ENCODE measurements at regions of chr12 and their contacts with region 1.

Region 1: GRCh38 chr12:45615268-45615667 is 114.2 kb upstream of the ARID2 start:
- DNase-seq: no peak
- ATAC-seq: no peak
- H3K4me3 ChIP-seq: no peak overlapping the region
- H3K27ac ChIP-seq: no peak overlapping the region
- H3K4me1 ChIP-seq: no peaks in the 10 kb centered on the region
- H3K27me3 ChIP-seq: no peaks in the 10 kb centered on the region; the same call in none of the 2 replicates
- CTCF ChIP-seq: no peak

Region 2: GRCh38 chr12:45601888-45602287 is 13.4 kb before region 1 on chr12:
- CTCF ChIA-PET with region 1: no interaction called
- POLR2A ChIA-PET with region 1: interaction called, 16 read pairs
- in situ Hi-C with region 1: no loop called
- intact Hi-C with region 1: no loop called
- DNase-seq: no peak
- ATAC-seq: no peak
- H3K4me3 ChIP-seq: no peak overlapping the region
- H3K27ac ChIP-seq: no peak overlapping the region
- H3K4me1 ChIP-seq: no peaks in the 10 kb centered on the region
- H3K27me3 ChIP-seq: no peaks in the 10 kb centered on the region
- CTCF ChIP-seq: no peak